ENCODE measurements at regions of chr17 and their contacts with region 1.

Region 1: GRCh38 chr17:8941520-8941919 is 24.0 kb downstream of the PIK3R5 start:
- DNase-seq: peak; percentile 73
- H3K4me3 Mint-ChIP-seq: peak overlapping the region; percentile 58
- H3K27ac Mint-ChIP-seq: peak overlapping the region; percentile 86
- H3K4me1 Mint-ChIP-seq: peaks cover 66% of the 10 kb centered on the region
- H3K27me3 Mint-ChIP-seq: no peaks in the 10 kb centered on the region

Region 2: DNA sequence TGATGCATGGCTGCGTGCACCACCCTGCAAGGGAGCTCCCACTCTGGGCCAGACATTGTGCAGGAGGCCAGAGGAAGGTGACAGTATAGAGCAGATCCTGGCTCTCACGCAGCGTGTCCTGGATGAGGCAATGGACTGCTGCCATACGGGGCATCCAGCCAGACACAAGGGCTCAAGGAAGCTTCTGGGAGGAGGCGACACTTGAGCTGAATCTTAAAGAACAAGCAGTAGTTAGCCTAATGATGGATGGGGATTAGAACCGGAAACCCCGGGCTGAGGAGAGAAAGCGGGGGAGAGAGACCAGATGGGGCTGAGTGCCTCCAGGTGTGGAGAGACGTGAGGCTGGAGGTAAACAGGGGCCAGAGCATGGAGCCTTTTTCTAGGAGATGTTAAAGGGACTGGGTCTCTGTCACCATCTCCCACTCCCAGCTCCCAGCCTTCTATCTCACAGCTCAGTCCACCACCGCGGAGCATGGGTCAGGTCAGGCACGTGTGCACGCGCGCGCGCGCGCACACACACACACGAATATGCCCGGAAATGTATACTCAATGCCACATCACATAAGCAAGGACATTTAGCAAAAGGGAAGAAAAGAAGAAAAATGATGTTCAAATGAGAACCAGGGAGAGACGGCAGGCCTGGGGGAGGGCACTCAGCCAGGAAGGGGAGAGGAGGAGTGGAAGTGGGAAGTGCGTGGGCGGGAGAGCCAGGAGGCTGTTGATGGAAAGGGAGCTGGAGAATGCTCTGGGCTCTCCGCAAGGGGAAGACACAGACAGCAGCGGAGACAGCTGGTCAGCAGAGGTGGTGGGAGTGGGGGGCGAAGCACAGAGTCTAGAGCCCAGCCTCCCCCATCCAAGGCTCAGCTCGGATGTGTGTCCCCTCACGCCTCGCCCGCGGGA is 243.1 kb before region 1 on chr17:
- CTCF ChIA-PET with region 1: no interaction called
- intact Hi-C with region 1: no loop called
- DNase-seq: no peak
- H3K4me3 Mint-ChIP-seq: no peak overlapping the region
- H3K27ac Mint-ChIP-seq: no peak overlapping the region
- H3K4me1 Mint-ChIP-seq: no peaks in the 10 kb centered on the region
- H3K27me3 Mint-ChIP-seq: peaks cover 6% of the 10 kb centered on the region

Region 3: GRCh38 chr17:8857919-8858318 is 83.6 kb before region 1 on chr17:
- CTCF ChIA-PET with region 1: no interaction called
- intact Hi-C with region 1: loop called (anchors 5 kb)
- DNase-seq: peak; percentile 73
- H3K4me3 Mint-ChIP-seq: no peak overlapping the region
- H3K27ac Mint-ChIP-seq: peak overlapping the region; percentile 70
- H3K4me1 Mint-ChIP-seq: peaks cover 23% of the 10 kb centered on the region
- H3K27me3 Mint-ChIP-seq: no peaks in the 10 kb centered on the region

Region 4: GRCh38 chr17:8900626-8901585 is 40.6 kb before region 1 on chr17:
- CTCF ChIA-PET with region 1: interaction called, 4 read pairs
- intact Hi-C with region 1: loop called (anchors 1 kb)
- DNase-seq: peak; percentile 58
- H3K4me3 Mint-ChIP-seq: no peak overlapping the region
- H3K27ac Mint-ChIP-seq: no peak overlapping the region
- H3K4me1 Mint-ChIP-seq: peaks cover 60% of the 10 kb centered on the region
- H3K27me3 Mint-ChIP-seq: no peaks in the 10 kb centered on the region

Region 5: DNA sequence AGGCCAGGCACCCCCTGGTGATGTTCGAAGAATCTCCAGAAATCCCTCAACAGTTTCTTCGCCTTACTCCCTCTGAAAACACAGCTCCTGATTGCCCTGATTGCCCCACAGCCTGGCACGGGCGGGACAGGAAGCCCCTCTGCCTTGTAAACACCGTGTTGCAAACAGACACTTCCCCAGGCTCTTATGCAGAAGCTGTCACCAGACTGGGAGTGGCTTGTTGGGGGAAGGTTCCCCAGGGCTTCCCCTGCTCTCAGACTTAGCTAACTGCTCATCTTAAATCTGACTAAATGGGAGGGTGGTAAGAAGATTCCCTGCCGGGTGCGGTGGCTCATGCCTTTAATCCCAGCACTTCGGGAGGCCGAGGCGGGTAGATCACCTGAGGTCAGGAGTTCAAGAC is 12.8 kb after region 1 on chr17:
- CTCF ChIA-PET with region 1: interaction called, 7 read pairs
- intact Hi-C with region 1: loop called (anchors 1 kb)
- DNase-seq: peak; percentile 92
- H3K4me3 Mint-ChIP-seq: peak overlapping the region; percentile 25
- H3K27ac Mint-ChIP-seq: peak overlapping the region; percentile 83
- H3K4me1 Mint-ChIP-seq: peaks cover 95% of the 10 kb centered on the region
- H3K27me3 Mint-ChIP-seq: no peaks in the 10 kb centered on the region

Region 6: DNA sequence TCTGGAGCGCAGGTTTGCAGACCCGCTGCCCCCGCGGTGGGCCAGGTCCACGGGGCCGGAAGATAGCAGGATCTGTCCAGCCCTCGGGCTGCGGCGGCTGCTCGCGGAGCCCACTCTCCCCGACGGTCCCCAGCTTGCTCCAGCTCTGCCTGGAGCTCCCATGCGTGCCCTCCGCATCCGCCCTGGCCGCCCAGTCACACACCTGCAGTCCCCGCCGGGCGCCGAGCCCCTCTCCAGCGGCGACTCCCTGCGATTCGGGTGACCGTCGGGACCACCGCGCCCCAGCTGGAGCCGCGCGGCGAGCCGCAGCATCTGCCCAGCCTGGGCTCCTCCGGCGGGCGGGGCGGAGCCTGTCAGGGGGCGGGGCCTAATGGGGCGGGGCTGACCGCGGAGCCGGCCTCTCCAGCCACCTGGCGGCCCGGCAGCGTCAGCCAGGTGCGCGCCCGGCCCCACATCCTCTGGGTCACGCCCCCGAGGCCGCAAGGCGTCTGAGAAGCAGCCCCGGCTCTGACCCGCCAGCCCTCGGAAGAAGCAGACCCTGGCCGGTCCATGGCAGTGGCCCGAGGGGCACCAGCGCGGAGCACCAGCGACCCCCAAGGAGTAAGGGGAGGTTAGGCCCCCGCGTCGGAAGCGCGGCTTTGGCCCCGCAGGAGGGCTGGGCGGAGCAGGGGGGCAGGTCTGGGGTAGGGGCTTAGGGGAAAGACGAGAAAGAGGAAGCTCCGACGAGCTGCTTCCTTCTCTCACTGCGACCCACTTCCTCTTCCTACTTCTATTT is 24.1 kb after region 1 on chr17 and contains the start of gene PIK3R5:
- CTCF ChIA-PET with region 1: interaction called, 6 read pairs
- intact Hi-C with region 1: loop called (anchors 1 kb)
- DNase-seq: peak; percentile 82
- H3K4me3 Mint-ChIP-seq: peak within 1 kb of the TSS; percentile 95
- H3K27ac Mint-ChIP-seq: peak within 1 kb of the TSS; percentile 80
- H3K4me1 Mint-ChIP-seq: peaks cover 46% of the 10 kb centered on the region
- H3K27me3 Mint-ChIP-seq: no peaks in the 10 kb centered on the region
- total RNA-seq, gene PIK3R5: 15.9 to 18.1 TPM

Measured in activated naive CD4-positive, alpha-beta T cell treated with anti-CD3 and anti-CD28 coated beads for 36 hours (primary cell).